AG04449 (cell line): ENCODE measurements at regions of chr6 and their contacts with region 1.

Region 1: DNA sequence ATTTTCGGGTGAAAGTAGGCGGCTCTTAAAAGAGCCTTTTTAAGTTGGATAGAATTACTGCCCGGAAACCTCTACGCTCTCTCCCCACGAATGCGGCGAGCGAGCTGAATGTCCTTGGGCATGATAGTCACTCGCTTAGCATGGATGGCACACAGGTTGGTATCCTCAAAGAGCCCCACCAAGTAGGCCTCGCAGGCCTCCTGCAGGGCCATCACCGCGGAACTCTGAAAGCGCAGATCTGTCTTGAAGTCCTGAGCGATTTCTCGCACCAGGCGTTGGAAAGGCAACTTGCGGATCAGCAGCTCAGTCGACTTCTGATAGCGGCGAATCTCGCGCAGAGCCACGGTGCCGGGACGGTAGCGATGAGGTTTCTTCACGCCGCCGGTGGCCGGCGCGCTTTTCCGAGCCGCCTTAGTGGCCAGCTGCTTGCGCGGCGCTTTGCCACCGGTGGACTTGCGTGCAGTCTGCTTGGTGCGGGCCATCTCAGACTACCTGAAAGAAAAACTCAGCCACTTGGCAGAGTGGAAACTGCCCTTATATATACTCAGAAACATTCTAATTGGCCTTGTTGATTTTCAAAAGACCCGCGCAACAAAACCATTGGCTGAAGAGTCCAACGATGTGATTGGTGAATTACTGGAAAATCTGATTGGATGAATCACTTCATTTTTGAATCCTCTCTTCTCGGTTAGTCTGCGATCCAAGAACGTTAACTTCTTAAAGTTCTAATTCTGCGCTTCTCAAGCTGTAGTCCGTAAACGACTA is 93.9 kb upstream of the BTN3A2 start:
- DNase-seq: no peak
- H3K4me3 ChIP-seq: peak overlapping the region; percentile 63
- CTCF ChIP-seq: no peak

Region 2: GRCh38 chr6:26223650-26224546 is 47.2 kb before region 1 on chr6:
- CTCF ChIA-PET with region 1: no interaction called
- POLR2A ChIA-PET with region 1: interaction called, 15 read pairs
- DNase-seq: no peak
- H3K4me3 ChIP-seq: peak overlapping the region; percentile 69
- CTCF ChIP-seq: no peak

Region 3: GRCh38 chr6:26249957-26250697 is 21.0 kb before region 1 on chr6:
- CTCF ChIA-PET with region 1: interaction called, 13 read pairs
- POLR2A ChIA-PET with region 1: interaction called, 62 read pairs
- DNase-seq: no peak
- H3K4me3 ChIP-seq: peak overlapping the region; percentile 68
- CTCF ChIP-seq: peak; percentile 45

Region 4: GRCh38 chr6:26258200-26258977 is 12.7 kb before region 1 on chr6:
- CTCF ChIA-PET with region 1: interaction called, 18 read pairs
- POLR2A ChIA-PET with region 1: interaction called, 3 read pairs
- DNase-seq: no peak
- H3K4me3 ChIP-seq: no peak overlapping the region
- CTCF ChIP-seq: no peak

Region 5: DNA sequence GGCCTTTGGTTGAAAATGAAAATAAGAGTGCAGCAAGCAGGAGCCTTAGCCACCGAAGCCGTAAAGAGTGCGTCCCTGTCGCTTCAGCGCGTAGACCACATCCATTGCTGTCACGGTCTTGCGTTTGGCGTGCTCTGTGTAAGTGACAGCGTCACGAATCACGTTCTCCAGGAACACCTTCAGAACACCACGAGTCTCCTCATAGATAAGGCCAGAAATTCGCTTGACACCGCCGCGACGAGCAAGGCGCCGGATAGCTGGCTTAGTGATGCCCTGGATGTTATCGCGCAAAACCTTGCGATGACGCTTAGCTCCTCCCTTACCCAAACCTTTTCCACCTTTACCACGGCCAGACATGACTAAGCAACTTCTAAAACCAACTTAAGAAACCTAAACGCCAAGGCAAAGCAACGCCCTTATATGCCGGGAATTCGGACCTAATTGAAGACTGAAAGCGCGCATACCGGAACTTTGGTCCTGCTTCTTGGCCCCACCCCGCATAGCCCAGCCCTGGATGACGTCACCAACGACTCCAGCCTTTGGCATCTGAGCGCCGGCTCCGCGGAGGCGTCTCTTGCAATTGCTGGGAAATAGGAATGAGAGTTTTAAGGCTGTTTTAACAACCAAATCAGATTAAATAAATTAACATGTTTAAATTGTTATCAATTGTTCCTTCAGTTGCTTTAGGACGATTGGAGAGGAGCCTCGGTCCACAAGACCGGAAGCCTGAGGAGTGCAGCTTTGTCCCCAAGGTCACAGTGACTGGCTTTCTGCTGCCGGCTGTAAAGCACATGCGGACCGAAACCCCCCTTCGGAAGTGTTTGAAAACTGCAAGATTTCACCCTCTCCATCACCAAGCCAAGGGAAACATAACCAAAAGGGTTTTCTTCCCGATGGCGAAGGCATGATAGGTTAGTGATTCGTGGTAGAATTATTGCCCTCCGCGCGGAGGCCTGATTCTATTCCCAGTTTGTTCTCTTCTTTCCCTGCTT is 14.4 kb after region 1 on chr6:
- CTCF ChIA-PET with region 1: interaction called, 11 read pairs
- POLR2A ChIA-PET with region 1: interaction called, 42 read pairs
- DNase-seq: peak; percentile 88
- H3K4me3 ChIP-seq: peak overlapping the region; percentile 90
- CTCF ChIP-seq: no peak

Region 6: DNA sequence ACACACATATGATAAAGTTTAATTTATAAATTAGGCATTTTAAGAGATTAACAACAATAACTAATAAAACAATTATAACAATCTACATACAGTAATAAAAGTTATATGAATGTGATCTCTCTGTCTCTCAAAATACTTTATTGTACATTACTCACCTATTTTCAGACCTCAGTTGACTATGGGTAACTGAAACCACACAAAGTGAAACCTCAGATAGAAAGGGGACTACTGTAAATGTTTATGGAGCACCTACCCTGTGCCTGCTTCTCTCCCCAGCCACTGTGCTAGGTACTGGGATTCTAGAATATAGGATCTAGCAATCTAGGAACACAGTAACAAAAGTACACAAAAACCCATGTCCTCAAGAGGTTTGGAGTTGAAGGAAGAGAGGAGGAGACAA is 30.6 kb after region 1 on chr6:
- CTCF ChIA-PET with region 1: no interaction called
- POLR2A ChIA-PET with region 1: no interaction called
- DNase-seq: no peak
- H3K4me3 ChIP-seq: no peak overlapping the region
- CTCF ChIP-seq: no peak